ENCODE measurements at regions of chr6 and their contacts with region 1.

Region 1: DNA sequence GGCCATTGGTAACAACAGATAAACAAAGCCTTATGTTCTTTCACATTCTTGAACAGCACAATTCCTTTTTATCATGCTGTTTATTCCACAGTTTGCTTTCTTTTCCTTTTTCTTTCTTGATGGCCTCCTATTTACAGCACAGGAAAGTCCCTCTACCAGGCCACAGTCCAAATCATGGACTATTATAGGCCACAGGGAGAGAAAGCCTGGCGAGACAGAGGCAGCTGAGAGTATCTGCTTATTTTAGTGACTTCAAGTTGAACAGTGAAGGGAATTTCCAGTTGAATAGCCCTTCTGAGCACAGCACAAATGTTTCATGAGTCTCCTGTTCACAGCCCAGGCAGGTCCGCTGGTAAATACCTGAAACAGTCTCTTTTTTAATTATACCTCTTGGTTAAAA is 263.7 kb upstream of the ARID1B start:
- DNase-seq: no peak

Region 2: GRCh38 chr6:156131221-156131903 is 382.1 kb before region 1 on chr6:
- intact Hi-C with region 1: loop called in 1 of 2 experiments (anchors 5 kb)
- DNase-seq: no peak